Activated CD4-positive, alpha-beta memory T cell treated with anti-CD3 and anti-CD28 coated beads, Interleukin-2, amount 10 ng/mL, durations not matched to agents 7 days and 5 days (primary cell): ENCODE measurements at regions of chr3 and their contacts with region 1.

Region 1: GRCh38 chr3:42502429-42503250 is at the start of gene VIPR1:
- DNase-seq: peak; percentile 91
- H3K4me3 Mint-ChIP-seq: peak within 1 kb of the TSS; percentile 86
- H3K27ac Mint-ChIP-seq: no peak within 1 kb of the TSS
- H3K4me1 Mint-ChIP-seq: peaks cover 42% of the 10 kb centered on the region
- H3K27me3 Mint-ChIP-seq: peaks cover 34% of the 10 kb centered on the region
- total RNA-seq, gene VIPR1: 7.5 to 9.6 TPM

Region 2: DNA sequence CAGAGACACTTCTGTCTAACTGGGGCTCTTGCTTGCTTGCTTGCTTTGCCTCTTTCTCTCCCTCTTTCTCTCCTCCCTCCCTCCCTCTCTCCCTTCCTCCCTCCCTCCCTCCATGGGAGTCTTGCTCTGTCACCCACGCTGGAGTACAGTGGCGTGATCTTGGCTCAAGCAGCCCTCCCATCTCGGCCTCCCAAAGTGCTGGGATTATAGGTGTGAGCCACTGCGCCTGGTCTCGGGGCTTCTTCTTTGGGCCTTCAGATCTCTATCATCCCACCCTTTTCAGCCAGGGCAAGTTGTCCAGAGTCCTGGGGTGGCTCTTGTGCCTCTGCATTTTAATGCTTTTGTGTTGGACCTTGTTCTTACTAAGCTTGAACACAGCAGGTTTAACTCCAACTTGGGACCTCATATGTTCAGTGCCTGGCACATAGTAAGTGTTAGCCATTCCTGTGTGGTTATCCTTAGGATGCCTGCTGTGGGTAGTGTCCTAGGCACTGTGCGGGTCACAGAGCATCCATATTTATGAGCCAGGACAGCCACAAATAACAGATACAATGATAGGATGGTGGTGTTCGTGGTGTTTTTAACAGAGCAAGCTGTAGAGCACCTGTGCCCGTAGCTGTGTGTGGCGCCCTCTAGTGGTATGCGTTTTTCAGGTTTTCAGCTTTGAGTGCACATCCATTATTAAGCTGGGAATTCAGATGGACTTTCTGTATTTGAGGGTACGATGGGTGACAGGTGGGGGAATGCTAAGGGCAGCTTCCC is 311.8 kb before region 1 on chr3:
- CTCF ChIA-PET with region 1: no interaction called
- POLR2A ChIA-PET with region 1: no interaction called
- DNase-seq: peak; percentile 71
- H3K4me3 Mint-ChIP-seq: no peak overlapping the region
- H3K27ac Mint-ChIP-seq: no peak overlapping the region
- H3K4me1 Mint-ChIP-seq: peaks cover 37% of the 10 kb centered on the region
- H3K27me3 Mint-ChIP-seq: no peaks in the 10 kb centered on the region

Region 3: DNA sequence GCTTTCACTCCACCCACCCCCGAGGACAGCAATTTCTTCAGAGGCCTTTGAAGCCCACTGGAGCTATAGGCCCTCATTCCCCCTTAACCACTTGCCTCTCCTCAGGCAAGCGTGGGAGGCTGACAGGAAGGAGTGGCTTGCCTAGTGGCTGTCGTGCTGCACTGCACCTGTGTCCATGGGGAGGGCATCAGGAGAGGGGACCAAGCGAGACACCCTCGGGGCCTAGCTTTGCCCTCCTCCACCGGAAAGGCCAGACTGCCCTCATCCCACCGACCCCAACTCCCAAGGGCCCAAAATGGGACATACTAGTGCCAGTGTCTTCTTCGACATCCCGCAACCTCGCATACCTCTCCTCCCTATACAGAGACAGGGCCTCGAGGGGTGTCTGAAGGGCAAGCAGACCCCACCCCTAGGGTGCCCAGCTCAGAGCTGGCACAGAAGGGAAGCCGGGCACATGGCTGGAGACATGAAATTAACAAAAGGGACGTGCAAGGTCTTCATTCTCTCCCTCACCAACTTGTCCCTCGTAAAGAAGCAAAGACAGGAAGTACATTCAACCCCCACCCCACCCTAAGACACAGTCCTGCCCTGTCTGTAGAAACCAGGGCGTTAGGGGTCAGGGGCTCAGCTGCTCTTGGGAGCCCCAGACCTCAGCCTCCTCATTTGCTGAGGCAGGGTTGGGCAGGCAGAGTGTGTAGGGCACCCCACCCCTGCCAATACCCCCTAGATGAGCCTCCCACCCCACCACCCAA is 24.2 kb after region 1 on chr3:
- CTCF ChIA-PET with region 1: interaction called, 11 read pairs
- POLR2A ChIA-PET with region 1: interaction called, 5 read pairs
- DNase-seq: peak; percentile 45
- H3K4me3 Mint-ChIP-seq: no peak overlapping the region
- H3K27ac Mint-ChIP-seq: peak overlapping the region; percentile 65
- H3K4me1 Mint-ChIP-seq: peaks cover 53% of the 10 kb centered on the region
- H3K27me3 Mint-ChIP-seq: no peaks in the 10 kb centered on the region

Region 4: DNA sequence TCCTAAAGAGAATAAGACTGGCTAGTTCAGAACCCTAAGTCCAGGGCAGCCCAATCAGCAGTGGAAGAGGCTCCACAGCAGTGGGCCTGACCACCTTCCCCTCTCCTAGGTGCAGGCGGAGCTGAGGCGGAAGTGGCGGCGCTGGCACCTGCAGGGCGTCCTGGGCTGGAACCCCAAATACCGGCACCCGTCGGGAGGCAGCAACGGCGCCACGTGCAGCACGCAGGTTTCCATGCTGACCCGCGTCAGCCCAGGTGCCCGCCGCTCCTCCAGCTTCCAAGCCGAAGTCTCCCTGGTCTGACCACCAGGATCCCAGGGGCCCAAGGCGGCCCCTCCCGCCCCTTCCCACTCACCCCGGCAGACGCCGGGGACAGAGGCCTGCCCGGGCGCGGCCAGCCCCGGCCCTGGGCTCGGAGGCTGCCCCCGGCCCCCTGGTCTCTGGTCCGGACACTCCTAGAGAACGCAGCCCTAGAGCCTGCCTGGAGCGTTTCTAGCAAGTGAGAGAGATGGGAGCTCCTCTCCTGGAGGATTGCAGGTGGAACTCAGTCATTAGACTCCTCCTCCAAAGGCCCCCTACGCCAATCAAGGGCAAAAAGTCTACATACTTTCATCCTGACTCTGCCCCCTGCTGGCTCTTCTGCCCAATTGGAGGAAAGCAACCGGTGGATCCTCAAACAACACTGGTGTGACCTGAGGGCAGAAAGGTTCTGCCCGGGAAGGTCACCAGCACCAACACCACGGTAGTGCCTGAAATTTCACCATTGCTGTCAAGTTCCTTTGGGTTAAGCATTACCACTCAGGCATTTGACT is 33.5 kb after region 1 on chr3:
- CTCF ChIA-PET with region 1: interaction called, 75 read pairs
- POLR2A ChIA-PET with region 1: interaction called, 5 read pairs
- DNase-seq: peak; percentile 56
- H3K4me3 Mint-ChIP-seq: no peak overlapping the region
- H3K27ac Mint-ChIP-seq: no peak overlapping the region
- H3K4me1 Mint-ChIP-seq: peaks cover 18% of the 10 kb centered on the region
- H3K27me3 Mint-ChIP-seq: no peaks in the 10 kb centered on the region

Region 5: DNA sequence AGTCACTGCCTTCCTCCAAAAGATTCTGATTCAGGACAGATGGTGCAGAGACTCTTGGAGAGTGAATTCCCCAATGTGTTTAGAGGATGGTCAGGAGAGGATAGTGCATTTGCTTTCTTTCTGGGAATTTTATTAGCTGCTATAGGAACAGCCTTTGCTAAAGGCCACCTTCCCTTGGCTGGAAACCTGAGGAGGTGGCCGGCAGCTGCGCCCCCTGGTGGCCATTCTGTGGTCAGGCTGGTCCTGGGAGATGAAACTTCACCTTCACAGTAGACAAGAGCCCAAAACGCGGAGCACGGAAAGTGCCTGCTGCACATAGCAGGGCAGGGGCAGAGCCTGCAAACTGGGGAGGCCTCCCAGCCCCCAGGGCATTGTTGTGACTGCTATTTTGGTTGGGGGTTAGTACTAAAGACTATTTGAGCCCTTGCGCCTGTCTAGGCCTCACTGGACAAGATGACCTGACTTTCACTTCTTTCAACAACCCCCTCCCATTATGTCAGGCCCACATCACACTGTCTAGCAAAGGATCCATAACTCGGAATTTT is 44.8 kb after region 1 on chr3:
- CTCF ChIA-PET with region 1: interaction called, 24 read pairs
- POLR2A ChIA-PET with region 1: interaction called, 7 read pairs
- DNase-seq: peak; percentile 66
- H3K4me3 Mint-ChIP-seq: no peak overlapping the region
- H3K27ac Mint-ChIP-seq: no peak overlapping the region
- H3K4me1 Mint-ChIP-seq: peaks cover 3% of the 10 kb centered on the region
- H3K27me3 Mint-ChIP-seq: no peaks in the 10 kb centered on the region

Region 6: DNA sequence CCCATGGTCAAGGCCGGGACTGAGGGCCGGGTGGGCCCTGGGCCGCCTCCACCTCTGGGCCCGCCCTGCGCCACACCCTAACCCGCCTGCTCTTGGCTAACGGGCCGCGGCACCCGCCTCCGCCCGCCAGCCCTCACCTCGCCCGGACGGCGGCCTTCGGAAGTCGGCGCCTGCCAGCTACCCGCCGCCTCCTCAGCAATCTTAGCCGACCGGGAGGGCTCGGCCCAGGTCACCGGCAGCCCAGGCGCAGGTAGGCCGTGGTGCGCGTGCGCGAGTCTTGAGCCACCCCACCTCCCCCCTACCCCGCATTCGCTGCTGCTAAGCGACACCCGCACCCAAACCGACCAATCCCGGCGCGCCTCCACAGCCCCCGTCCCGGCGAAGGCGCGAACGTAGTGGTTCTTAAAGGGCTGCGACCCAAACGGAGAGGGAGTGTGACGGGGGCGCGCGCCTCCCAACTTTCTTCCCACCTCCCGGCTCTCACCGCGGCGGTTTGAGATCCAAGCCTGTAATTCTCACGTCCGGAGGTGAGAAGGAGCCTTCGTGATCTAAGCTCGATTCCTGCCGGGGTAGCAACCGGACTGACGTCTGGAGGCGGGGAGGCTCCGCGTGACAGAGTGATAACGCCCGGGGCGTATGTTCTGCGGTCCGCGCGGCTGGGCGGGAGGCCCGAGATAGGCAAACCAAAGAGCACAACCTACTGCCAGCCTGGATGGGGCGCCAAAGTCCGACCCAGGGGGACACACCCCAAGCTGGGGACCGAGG is 79.3 kb after region 1 on chr3 and contains the start of gene SEC22C:
- CTCF ChIA-PET with region 1: interaction called, 6 read pairs
- POLR2A ChIA-PET with region 1: interaction called, 15 read pairs
- DNase-seq: peak; percentile 96
- H3K4me3 Mint-ChIP-seq: peak within 1 kb of the TSS; percentile 86
- H3K27ac Mint-ChIP-seq: peak within 1 kb of the TSS; percentile 87
- H3K4me1 Mint-ChIP-seq: peaks cover 63% of the 10 kb centered on the region
- H3K27me3 Mint-ChIP-seq: no peaks in the 10 kb centered on the region
- total RNA-seq, gene SEC22C: 58.8 to 62.0 TPM

Region 7: GRCh38 chr3:42600111-42600988 is 97.7 kb after region 1 on chr3 and contains the start of gene NKTR:
- CTCF ChIA-PET with region 1: interaction called, 4 read pairs
- POLR2A ChIA-PET with region 1: interaction called, 11 read pairs
- DNase-seq: peak; percentile 100
- H3K4me3 Mint-ChIP-seq: peak within 1 kb of the TSS; percentile 84
- H3K27ac Mint-ChIP-seq: peak within 1 kb of the TSS; percentile 95
- H3K4me1 Mint-ChIP-seq: peaks cover 46% of the 10 kb centered on the region
- H3K27me3 Mint-ChIP-seq: no peaks in the 10 kb centered on the region
- total RNA-seq, gene NKTR: 97.8 to 98.9 TPM